ENCODE measurements at regions of chr20 and their contacts with region 1.

Region 1: DNA sequence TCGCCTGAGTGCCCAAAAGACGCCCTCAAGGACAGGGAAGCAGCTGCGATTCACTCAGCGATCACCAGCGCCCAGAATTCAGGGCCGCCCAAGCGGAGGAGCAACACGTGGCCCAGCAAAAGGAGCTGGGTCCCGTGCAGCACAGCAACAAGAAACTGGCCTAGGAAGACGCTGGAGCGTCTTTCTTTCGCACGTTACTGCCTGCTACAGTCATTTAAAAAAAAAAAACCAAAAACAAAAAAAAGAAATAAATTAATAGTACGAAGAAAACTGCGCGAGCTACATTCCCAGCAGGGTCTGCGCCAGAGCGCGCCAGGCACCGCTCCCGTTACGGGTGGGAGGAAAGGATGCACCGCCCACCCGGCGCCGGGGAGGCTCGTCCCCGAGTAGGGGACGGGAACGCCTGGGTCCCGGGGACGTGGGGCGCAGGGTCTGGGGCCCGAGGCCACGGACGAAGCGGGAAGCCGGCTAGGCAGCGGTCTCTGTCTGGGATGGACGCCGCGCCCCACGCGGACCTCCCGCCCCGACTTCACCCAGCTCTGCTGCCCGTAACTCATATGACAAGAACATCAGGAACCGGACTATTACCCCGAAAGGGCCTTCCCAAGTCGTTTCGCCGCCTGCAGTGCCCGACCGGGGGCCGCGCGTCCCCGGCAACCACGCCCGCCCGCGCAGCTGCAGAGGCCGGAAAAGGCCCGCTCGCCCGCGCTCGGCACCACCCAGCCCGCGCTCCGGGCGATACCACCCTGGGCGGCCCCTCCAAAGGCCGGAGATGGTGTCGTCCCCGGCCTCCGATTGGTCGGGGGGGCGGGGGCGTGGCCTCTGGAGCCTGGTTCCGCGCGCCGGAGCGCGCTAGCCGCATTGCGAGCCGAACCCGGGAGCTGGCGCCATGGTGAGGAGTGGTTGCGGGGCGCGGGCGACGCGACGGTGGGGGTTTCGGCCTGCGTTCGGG is at the start of gene NOP56:
- DNase-seq: peak; percentile 93 to 96
- ATAC-seq: peak; percentile 96 to 99 (median 98)
- H3K4me3 ChIP-seq: peak within 1 kb of the TSS; percentile 98
- H3K27ac ChIP-seq: peak within 1 kb of the TSS; percentile 95
- H3K4me1 ChIP-seq: peaks cover 18% of the 10 kb centered on the region
- H3K27me3 ChIP-seq: no peaks in the 10 kb centered on the region
- CTCF ChIP-seq: no peak
- total RNA-seq, gene NOP56: 90.9 to 114 (median 102) TPM

Region 2: GRCh38 chr20:2330090-2330695 is 321.9 kb before region 1 on chr20:
- intact Hi-C with region 1: no loop called
- DNase-seq: no peak
- ATAC-seq: no peak
- H3K4me3 ChIP-seq: no peak overlapping the region
- H3K27ac ChIP-seq: no peak overlapping the region
- H3K4me1 ChIP-seq: no peaks in the 10 kb centered on the region
- H3K27me3 ChIP-seq: peaks cover 0 to 3% (median 2%) of the 10 kb centered on the region in 3 donors
- CTCF ChIP-seq: no peak

Region 3: DNA sequence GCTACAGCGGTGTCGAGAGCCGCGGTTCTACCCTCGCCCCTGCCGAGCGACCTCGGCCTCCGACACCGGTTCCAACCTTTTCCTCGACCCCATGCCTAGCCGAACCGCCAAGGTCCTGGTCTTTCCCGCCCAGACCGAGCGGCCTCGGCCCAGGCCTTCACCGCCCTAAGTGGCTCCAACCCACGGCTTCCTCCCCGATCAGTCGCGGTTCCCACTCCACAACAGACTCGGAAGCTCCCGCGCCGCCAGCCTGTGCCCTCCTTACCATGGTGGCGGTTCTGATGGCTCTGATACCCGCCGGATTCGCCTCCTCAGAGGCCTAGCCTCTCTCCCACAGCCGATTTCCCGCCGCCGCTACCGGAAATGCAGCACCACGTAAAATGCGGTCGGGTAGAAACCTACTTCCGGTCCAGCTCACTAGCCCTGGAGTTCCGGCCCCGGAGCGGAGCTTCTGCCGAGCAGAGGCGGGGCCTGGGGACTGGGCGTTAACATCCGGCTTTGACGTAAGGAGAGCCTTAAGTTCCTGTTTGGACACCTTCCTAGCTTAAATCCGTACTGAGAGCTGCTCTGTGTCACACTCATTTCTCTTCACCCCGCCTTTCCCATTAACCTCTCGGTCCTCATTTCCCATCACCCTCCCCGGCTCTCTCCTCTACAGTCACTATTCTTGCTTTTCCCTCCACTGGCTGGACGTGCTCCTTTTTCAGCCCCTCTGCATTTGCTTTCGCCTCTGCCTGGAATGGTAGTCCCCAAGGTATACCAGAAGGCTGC is 181.4 kb before region 1 on chr20 and contains the start of gene SNRPB:
- intact Hi-C with region 1: loop called in 1 of 2 experiments (anchors 10 kb)
- DNase-seq: peak; percentile 95 to 98
- ATAC-seq: peak; percentile 98 to 99 (median 99)
- H3K4me3 ChIP-seq: peak within 1 kb of the TSS; percentile 91
- H3K27ac ChIP-seq: peak within 1 kb of the TSS; percentile 88
- H3K4me1 ChIP-seq: peaks cover 22% of the 10 kb centered on the region
- H3K27me3 ChIP-seq: no peaks in the 10 kb centered on the region
- CTCF ChIP-seq: no peak
- total RNA-seq, gene SNRPB: 41.9 to 114 (median 78.8) TPM

Region 4: DNA sequence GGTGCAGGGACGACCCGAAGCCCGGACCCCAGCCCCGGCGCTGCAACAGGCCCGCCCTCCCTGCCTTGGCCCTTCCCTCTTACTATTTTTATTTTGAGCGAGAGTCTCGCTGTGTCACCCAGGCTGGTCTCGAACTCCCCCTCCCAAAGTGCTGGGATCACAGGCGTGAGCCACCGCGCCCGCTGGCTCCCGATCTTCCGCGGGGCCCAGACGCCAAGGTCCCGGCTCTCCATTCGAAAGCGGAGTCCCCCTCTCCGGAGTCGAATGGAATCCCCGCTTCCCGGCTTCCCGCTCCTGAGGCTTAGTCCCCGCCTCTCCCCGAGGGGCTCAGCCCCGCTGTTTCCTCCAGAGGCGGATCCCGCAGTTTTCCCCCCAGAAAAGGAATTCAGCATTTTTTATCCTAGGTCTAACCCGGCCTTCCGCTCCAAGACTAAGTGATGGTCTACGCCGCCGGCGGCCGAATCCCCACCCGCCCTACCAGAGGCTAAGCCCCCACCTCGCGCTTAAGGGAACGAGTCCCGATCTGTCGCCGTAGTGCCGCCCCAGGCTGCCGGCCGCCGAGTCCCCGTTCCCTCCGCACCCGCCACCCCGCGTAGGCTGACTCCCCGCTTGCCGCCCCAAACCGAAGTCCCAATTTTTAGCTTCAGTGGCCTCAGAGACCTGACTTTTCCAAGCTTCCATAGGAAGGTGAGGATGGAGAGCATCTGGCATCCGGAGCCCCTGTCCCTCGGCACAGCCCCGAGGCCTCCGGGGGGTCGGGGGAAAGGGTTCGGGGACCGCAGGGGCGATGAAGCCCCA is 127.1 kb before region 1 on chr20:
- intact Hi-C with region 1: loop called in 1 of 2 experiments (anchors 5 kb)
- DNase-seq: peak; percentile 39 to 69
- ATAC-seq: peak; percentile 48 to 77 (median 61)
- H3K4me3 ChIP-seq: peak overlapping the region; percentile 80
- H3K27ac ChIP-seq: peak overlapping the region; percentile 67
- H3K4me1 ChIP-seq: no peaks in the 10 kb centered on the region
- H3K27me3 ChIP-seq: peaks cover 0 to 4% (median 2%) of the 10 kb centered on the region in 3 donors
- CTCF ChIP-seq: no peak

Region 5: DNA sequence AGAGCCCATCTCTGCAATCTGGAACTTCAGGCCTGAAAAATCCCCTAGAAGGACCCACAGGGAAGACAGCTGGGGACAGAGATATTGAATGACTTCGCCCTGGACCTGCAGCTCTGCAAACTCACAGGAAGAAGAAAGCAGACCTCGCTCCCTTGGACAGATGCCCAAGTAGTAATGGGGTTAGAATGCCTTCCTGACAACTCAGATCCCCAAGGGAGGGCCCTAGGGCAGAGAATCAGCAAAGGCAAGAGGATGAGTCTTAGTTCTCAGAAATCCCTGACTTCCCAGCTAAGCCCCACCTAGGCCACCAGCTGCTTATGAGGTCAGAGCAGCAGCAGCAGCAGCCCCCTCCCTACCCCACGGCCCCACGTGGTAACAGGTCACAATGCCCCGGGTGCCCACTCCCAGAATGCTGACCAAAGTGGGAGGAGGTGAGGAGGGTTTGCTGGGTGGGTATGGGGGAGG is 162.6 kb after region 1 on chr20 and contains the start of gene C20orf141:
- intact Hi-C with region 1: no loop called
- DNase-seq: peak; percentile 58 to 82
- ATAC-seq: peak in 3 of 4 donors; percentile 52 to 67 (median 60)
- H3K4me3 ChIP-seq: no peak within 1 kb of the TSS
- H3K27ac ChIP-seq: no peak within 1 kb of the TSS
- H3K4me1 ChIP-seq: no peaks in the 10 kb centered on the region
- H3K27me3 ChIP-seq: peaks cover 0 to 48% (median 10%) of the 10 kb centered on the region in 3 donors
- CTCF ChIP-seq: no peak
- total RNA-seq, gene C20orf141: not detected

Region 6: DNA sequence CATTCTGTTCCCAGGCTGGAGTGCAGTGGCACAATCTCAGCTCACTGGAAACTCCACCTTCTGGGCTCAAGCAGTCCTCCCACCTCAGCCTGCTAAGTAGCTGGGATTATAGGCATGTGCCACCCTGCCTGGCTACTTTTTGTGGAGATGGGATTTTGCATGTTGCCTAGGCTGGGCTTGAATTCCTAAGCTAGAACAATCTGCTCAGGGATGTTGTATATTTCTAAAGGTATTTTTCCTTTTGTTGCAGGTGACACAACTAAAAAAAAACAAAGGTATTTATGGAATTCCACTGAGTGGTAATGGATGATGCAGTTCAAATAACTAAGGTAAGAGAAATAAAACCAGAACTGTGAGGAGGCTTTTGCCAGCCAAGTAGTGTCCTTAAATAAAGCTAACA is 270.9 kb after region 1 on chr20:
- intact Hi-C with region 1: no loop called
- DNase-seq: no peak
- ATAC-seq: no peak
- H3K4me3 ChIP-seq: no peak overlapping the region
- H3K27ac ChIP-seq: no peak overlapping the region
- H3K4me1 ChIP-seq: peaks cover 28% of the 10 kb centered on the region
- H3K27me3 ChIP-seq: no peaks in the 10 kb centered on the region
- CTCF ChIP-seq: no peak

Measured in psoas muscle (tissue), 8 donors.